Activated CD4-positive, alpha-beta T cell treated with anti-CD3 and anti-CD28 coated beads, Interleukin-2, amount 10 ng/mL, durations not matched to agents 24 days and 14 days (primary cell): ENCODE measurements at regions of chr12 and their contacts with region 1.

Region 1: GRCh38 chr12:103924761-103925641 is 5.2 kb upstream of the HSP90B1 start:
- DNase-seq: peak; percentile 80
- H3K4me3 Mint-ChIP-seq: peak overlapping the region; percentile 67
- H3K27ac Mint-ChIP-seq: peak overlapping the region; percentile 86
- H3K4me1 Mint-ChIP-seq: peaks cover 36% of the 10 kb centered on the region
- H3K27me3 Mint-ChIP-seq: peaks cover under 1% of the 10 kb centered on the region

Region 2: GRCh38 chr12:103877934-103878510 is 47.0 kb before region 1 on chr12:
- intact Hi-C with region 1: loop called (anchors 1 kb)
- DNase-seq: peak; percentile 88
- H3K4me3 Mint-ChIP-seq: no peak overlapping the region
- H3K27ac Mint-ChIP-seq: no peak overlapping the region
- H3K4me1 Mint-ChIP-seq: peaks cover 29% of the 10 kb centered on the region
- H3K27me3 Mint-ChIP-seq: peaks cover 12% of the 10 kb centered on the region

Region 3: DNA sequence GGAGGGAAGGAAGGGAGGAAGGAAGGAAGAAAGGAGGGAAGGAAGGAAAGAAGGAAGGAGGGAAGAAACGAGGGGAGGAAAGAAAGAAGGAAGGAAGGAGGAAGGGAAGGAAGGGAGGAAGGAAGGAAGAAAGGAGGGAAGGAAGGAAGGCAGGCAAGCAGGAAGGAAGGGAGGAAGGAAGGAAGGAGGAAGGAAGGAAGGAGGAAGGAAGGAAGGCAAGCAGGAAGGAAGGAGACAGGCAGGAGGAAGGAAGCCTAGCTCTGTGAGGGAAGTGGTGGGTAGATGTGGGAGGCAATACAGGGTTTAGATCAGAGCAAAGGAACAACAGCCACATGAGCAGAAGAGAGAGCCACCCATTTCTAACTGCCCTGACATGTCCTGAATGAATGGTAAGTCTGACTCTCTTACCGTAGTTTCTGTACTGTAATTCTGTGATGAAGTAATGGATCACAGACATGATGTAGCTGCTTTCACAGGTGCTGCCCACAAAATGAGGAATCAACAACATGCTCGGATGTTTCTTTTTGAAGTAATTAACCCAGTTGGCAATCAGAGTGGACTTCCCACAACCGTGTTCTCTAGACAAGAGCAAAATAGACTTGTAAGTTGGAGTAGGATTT is 19.2 kb before region 1 on chr12:
- intact Hi-C with region 1: loop called (anchors 2 kb)
- DNase-seq: no peak
- H3K4me3 Mint-ChIP-seq: no peak overlapping the region
- H3K27ac Mint-ChIP-seq: peak overlapping the region; percentile 69
- H3K4me1 Mint-ChIP-seq: peaks cover 14% of the 10 kb centered on the region
- H3K27me3 Mint-ChIP-seq: peaks cover 5% of the 10 kb centered on the region

Region 4: GRCh38 chr12:103936679-103937078 is 11.7 kb after region 1 on chr12:
- intact Hi-C with region 1: no loop called
- DNase-seq: no peak
- H3K4me3 Mint-ChIP-seq: no peak overlapping the region
- H3K27ac Mint-ChIP-seq: peak overlapping the region; percentile 22
- H3K4me1 Mint-ChIP-seq: peaks cover 35% of the 10 kb centered on the region
- H3K27me3 Mint-ChIP-seq: no peaks in the 10 kb centered on the region